ENCODE measurements at regions of chr22 and their contacts with region 1.

Region 1: GRCh38 chr22:28594797-28595462 is 84.7 kb downstream of the TTC28 start:
- DNase-seq: no peak
- H3K4me3 Mint-ChIP-seq: no peak overlapping the region
- H3K27ac Mint-ChIP-seq: no peak overlapping the region
- H3K4me1 Mint-ChIP-seq: no peaks in the 10 kb centered on the region
- H3K27me3 Mint-ChIP-seq: peaks cover 4% of the 10 kb centered on the region

Region 2: DNA sequence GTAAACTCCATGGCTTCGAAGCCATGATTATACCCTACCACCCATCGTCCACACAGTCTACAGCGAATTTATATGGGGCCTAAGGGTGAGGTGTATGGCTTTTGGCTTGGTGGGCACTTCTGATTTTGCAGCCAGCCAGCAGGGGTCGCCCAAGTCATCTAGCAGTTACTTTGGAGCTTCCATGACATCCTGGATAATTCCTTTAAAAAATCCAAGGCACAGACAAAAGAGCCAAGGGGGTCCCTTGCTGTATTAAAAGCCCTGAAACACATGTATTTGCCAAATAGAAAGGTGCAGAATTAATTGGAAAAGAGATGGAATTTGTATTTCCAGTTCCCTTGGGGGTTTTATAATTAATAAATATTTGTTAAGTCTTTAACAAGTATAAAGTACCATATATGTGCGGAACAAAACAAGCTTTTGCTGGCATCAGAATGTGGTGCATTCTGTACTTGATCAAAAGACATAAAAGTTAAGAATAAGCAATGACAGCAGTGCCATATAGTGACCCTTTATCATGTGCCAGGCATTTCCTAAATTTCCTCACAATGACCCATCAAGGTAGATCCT is 543.1 kb before region 1 on chr22:
- CTCF ChIA-PET with region 1: interaction called, 4 read pairs
- intact Hi-C with region 1: loop called (anchors 1 kb)
- DNase-seq: peak; percentile 58
- H3K4me3 Mint-ChIP-seq: no peak overlapping the region
- H3K27ac Mint-ChIP-seq: no peak overlapping the region
- H3K4me1 Mint-ChIP-seq: no peaks in the 10 kb centered on the region
- H3K27me3 Mint-ChIP-seq: no peaks in the 10 kb centered on the region

Region 3: DNA sequence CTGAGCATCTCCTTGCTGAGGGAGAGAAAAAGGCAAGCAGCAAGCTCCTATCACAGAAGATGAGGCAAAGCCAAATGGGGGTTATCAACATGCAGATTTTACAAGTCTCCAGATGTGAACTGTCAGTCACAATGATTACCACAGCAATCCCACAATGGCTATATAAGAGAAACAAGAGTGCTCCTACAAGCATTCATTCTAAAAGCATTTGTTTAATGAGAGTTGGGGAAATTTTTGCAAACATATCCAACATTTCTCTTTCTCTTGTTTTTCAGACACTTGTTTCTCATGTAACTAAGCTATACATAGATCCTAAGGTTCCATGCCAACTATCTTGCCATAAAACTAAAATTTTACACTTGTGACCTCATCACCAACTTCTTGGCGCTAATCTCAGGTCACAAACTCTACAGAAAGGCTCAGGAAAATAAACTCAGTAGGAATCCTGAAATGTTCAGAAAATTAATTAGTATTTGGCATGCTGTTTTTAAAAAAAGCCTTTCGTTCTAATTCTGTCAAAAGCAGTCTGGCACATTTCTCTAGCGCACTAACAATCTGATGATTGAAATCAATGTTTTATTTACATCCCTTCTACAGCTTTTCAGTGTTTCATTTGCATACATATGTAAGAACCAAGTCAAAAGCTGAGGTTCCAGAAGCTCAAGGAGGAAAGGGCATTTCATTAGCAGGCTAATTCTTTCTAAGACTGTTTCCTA is 114.8 kb before region 1 on chr22:
- CTCF ChIA-PET with region 1: no interaction called
- intact Hi-C with region 1: no loop called
- DNase-seq: no peak
- H3K4me3 Mint-ChIP-seq: no peak overlapping the region
- H3K27ac Mint-ChIP-seq: no peak overlapping the region
- H3K4me1 Mint-ChIP-seq: no peaks in the 10 kb centered on the region
- H3K27me3 Mint-ChIP-seq: peaks cover 18% of the 10 kb centered on the region

Region 4: GRCh38 chr22:29031227-29032011 is 436.5 kb after region 1 on chr22:
- CTCF ChIA-PET with region 1: no interaction called
- intact Hi-C with region 1: no loop called
- DNase-seq: no peak
- H3K4me3 Mint-ChIP-seq: no peak overlapping the region
- H3K27ac Mint-ChIP-seq: no peak overlapping the region
- H3K4me1 Mint-ChIP-seq: peaks cover 17% of the 10 kb centered on the region
- H3K27me3 Mint-ChIP-seq: peaks cover 36% of the 10 kb centered on the region